Esophagus muscularis mucosa (tissue), 4 donors: ENCODE measurements at regions of chr1 and their contacts with region 1.

Region 1: GRCh38 chr1:15848957-15849774 is 1.7 kb downstream of the SPEN start:
- DNase-seq: peak; percentile 96
- H3K4me3 ChIP-seq: peak overlapping the region; percentile 76 to 95 (median 95)
- H3K27ac ChIP-seq: peak overlapping the region; percentile 95 to 100 (median 98)
- H3K4me1 ChIP-seq: peaks cover 46 to 71% (median 68%) of the 10 kb centered on the region in 4 donors
- H3K27me3 ChIP-seq: no peaks in the 10 kb centered on the region
- CTCF ChIP-seq: no peak
- EP300 ChIP-seq: no peak
- POLR2A ChIP-seq: no peak

Region 2: DNA sequence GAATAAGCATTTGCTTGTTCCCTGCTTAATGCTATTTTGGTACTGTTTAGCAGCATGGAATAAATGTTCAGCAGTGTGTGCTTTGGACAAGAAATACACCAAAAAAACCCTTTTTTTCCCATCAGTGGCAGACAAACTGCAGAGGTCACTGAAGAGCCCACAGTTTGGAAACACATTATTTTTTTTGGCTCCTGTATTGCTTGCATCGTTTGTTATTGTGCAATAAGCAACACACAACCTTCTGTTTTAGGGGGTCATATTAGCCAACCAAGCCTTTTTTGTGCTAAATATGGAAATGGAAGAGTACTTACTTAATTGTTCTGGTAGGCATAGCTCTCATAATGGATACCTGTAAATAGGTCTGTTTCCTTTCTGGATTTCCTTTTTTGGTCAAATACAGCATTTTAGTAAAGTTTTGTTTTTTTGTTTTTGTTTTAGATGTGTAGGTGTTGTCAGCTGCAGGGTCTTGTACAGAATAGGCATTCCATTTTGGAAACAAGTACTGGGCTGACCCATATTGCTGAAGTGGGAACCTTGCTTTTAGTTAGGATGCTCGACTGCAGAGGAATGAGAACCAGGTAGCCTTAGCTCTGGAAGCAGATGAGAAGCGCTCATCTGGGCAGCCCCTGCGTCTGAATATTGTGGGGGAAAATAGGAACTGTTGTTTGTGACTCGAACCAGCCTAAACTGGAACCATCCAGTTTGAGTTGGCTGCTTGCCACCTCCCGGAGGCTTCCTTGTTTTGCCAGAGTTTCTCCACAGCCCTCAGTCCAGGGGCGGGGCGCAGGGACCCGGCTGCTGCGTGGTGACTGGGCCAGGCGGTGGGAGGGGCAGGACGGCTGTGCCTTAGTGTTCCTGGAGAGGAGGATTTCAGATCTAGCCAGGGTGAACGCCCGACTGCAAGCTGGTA is 36.8 kb after region 1 on chr1:
- intact Hi-C with region 1: loop called (anchors 2 kb)
- DNase-seq: peak; percentile 99
- H3K4me3 ChIP-seq: peak overlapping the region; percentile 44 to 59 (median 48)
- H3K27ac ChIP-seq: peak overlapping the region; percentile 80 to 93 (median 92)
- H3K4me1 ChIP-seq: peaks cover 42 to 90% (median 82%) of the 10 kb centered on the region in 4 donors
- H3K27me3 ChIP-seq: no peaks in the 10 kb centered on the region
- CTCF ChIP-seq: peak in 2 of 3 experiments; percentile 18 to 32
- EP300 ChIP-seq: no peak
- POLR2A ChIP-seq: no peak

Region 3: GRCh38 chr1:16009030-16009709 is 160.0 kb after region 1 on chr1:
- intact Hi-C with region 1: no loop called
- DNase-seq: peak; percentile 95
- H3K4me3 ChIP-seq: no peak overlapping the region
- H3K27ac ChIP-seq: no peak overlapping the region
- H3K4me1 ChIP-seq: peaks cover 18 to 23% (median 20%) of the 10 kb centered on the region in 4 donors
- H3K27me3 ChIP-seq: no peaks in the 10 kb centered on the region
- CTCF ChIP-seq: peak; percentile 97 to 99 (median 99)
- EP300 ChIP-seq: no peak
- POLR2A ChIP-seq: no peak